ENCODE measurements at regions of chr7 and their contacts with region 1.

Region 1: DNA sequence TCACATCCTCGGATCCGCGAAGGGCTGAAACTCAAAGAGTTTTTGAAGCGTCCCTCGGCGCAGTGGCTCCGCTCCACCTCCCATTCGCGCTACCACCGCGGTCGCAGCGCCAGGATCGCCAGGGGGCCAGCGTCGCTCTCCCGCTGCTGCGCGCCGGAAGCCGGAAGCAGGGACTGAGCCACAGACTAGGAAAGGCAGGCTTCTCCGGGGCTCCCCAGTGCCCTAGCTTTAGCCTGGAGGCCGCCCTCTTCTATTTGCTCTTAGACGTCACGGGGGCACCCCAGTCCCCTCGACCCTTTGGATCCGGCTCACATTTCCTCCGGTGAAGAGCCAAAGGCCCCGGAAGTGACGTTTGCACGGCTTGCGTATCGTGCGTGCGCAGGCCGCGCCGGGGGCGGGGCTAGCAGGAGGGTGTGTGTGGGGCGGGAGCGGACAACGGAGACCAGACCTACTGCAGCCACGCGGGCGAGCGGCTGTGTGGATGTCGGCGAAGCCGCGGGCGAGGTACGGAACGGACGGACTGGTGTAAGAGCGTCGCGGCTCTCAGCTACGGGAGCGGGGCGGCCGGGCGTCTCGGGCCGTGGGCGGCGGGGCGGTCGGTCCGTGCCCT is 25.5 kb downstream of the KCTD7 start:
- DNase-seq: peak; percentile 98
- H3K4me3 ChIP-seq: peak overlapping the region; percentile 48 to 84 (median 56)
- H3K27ac ChIP-seq: peak overlapping the region; percentile 96
- H3K4me1 ChIP-seq: peaks cover 3% of the 10 kb centered on the region
- H3K27me3 ChIP-seq: no peaks in the 10 kb centered on the region
- CTCF ChIP-seq: peak; percentile 8 to 32
- POLR2A ChIP-seq: peak; percentile 95

Region 2: GRCh38 chr7:66628361-66629140 is 25.7 kb before region 1 on chr7 and contains the start of gene KCTD7:
- CTCF ChIA-PET with region 1: interaction called, 5 read pairs
- POLR2A ChIA-PET with region 1: interaction called, 3 read pairs
- dilution Hi-C with region 1: no loop called
- intact Hi-C with region 1: loop called (anchors 1 kb)
- DNase-seq: peak; percentile 99
- H3K4me3 ChIP-seq: peak within 1 kb of the TSS; percentile 70 to 90 (median 71)
- H3K27ac ChIP-seq: peak within 1 kb of the TSS; percentile 64
- H3K4me1 ChIP-seq: peaks cover 5% of the 10 kb centered on the region
- H3K27me3 ChIP-seq: no peaks in the 10 kb centered on the region
- CTCF ChIP-seq: no peak
- POLR2A ChIP-seq: peak; percentile 91
- total RNA-seq, gene KCTD7: 8.7 and 11.3 TPM in 2 replicates

Region 3: GRCh38 chr7:66740302-66740979 is 86.2 kb after region 1 on chr7 and contains the start of gene RABGEF1:
- CTCF ChIA-PET with region 1: no interaction called
- POLR2A ChIA-PET with region 1: no interaction called
- dilution Hi-C with region 1: no loop called
- intact Hi-C with region 1: loop called (anchors 1 kb)
- DNase-seq: peak; percentile 94
- H3K4me3 ChIP-seq: peak within 1 kb of the TSS; percentile 81 to 99 (median 82)
- H3K27ac ChIP-seq: peak within 1 kb of the TSS; percentile 83
- H3K4me1 ChIP-seq: peaks cover 5% of the 10 kb centered on the region
- H3K27me3 ChIP-seq: no peaks in the 10 kb centered on the region
- CTCF ChIP-seq: no peak
- POLR2A ChIP-seq: peak; percentile 64
- total RNA-seq, gene RABGEF1: 14.4 and 15.5 TPM in 2 replicates